ENCODE measurements at regions of chr10 and their contacts with region 1.

Region 1: DNA sequence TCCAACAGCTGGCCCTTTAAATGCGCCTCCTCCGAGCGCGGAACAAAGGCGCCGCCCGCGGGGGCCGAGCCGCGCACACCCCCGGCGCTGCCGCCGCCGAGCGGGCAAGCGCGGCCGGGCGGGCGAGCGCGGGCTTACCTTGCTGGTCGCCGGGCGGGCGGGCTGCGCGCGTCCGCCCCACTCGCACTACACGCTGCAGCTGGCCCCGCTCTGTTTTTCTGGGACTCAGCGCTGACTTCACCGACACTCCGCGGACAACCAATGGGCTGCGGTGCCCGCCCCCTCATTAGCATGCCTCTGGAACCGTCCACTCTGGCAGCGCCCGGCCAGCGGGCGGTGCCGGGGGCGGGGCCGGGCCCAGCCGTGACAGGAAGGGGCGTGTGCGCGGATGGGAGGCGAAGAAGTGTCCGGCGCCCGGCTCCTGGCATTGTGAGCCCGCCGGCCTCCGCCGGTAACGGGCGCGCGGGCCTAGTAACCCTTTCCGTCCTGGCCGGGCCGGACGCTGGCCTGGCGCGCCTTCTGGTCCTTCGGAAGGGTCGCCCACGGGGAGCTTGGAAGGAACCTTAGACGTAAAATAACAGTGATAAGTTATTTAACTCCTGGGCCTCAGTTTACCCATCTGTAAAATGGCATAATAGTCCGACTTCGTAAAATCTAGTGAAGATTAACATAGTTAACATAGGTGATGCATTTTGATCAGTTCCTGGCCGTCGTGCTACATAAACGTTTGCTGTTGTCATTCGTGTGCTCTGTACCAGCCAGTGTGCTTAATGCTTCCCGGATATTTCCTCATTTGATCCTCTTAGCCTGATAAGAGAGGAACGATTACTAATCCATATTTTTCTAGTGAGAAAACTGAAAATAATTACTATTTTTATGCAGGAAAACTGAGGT is at the start of gene SORBS1:
- DNase-seq: peak; percentile 96
- H3K4me3 Mint-ChIP-seq: peak within 1 kb of the TSS; percentile 88
- H3K27ac Mint-ChIP-seq: no peak within 1 kb of the TSS
- H3K4me1 Mint-ChIP-seq: no peaks in the 10 kb centered on the region
- H3K27me3 Mint-ChIP-seq: peaks cover 35% of the 10 kb centered on the region
- CTCF ChIP-seq: no peak
- total RNA-seq, gene SORBS1: 0.61 and 1.0 TPM in 2 replicates

Region 2: GRCh38 chr10:95474228-95475002 is 87.0 kb before region 1 on chr10:
- CTCF ChIA-PET with region 1: interaction called, 3 read pairs
- POLR2A ChIA-PET with region 1: interaction called, 3 read pairs
- intact Hi-C with region 1: loop called (anchors 5 kb)
- DNase-seq: peak; percentile 84
- H3K4me3 Mint-ChIP-seq: peak overlapping the region; percentile 30
- H3K27ac Mint-ChIP-seq: peak overlapping the region; percentile 90
- H3K4me1 Mint-ChIP-seq: peaks cover 31% of the 10 kb centered on the region
- H3K27me3 Mint-ChIP-seq: no peaks in the 10 kb centered on the region
- CTCF ChIP-seq: no peak

Region 3: DNA sequence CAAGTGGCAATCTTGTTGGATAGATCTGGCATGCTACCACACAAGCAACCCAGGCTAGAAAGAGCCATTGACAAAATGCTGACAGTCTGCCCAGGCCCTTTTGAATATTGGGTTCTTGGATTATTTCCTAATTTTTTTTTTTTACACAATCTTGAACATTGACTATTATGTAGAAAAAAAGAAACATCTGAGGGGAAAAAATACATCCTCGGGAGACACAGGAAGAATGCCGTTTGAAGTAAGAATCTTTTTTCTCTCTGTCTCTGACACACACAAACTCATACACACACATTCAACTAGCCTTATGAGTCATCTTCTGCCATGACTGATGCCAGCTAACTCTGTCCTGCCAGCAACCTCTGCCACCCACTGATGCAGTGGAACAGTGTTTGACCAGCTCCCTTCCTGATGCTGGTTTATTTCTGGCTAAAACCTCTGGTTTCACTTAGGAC is 47.5 kb before region 1 on chr10:
- CTCF ChIA-PET with region 1: no interaction called
- POLR2A ChIA-PET with region 1: no interaction called
- intact Hi-C with region 1: loop called (anchors 1 kb)
- DNase-seq: peak; percentile 76
- H3K4me3 Mint-ChIP-seq: no peak overlapping the region
- H3K27ac Mint-ChIP-seq: no peak overlapping the region
- H3K4me1 Mint-ChIP-seq: peaks cover 13% of the 10 kb centered on the region
- H3K27me3 Mint-ChIP-seq: no peaks in the 10 kb centered on the region
- CTCF ChIP-seq: no peak

Measured in MCF 10A (cell line).